Transverse colon (tissue), 4 donors: ENCODE measurements at regions of chr18 and their contacts with region 1.

Region 1: GRCh38 chr18:42114310-42114943 is 159.4 kb downstream of the PIK3C3 start:
- DNase-seq: peak; percentile 48
- H3K4me3 ChIP-seq: no peak overlapping the region
- H3K27ac ChIP-seq: peak overlapping the region in 1 of 4 donors; percentile 2
- H3K4me1 ChIP-seq: peaks cover 5 to 14% (median 10%) of the 10 kb centered on the region in 4 donors
- H3K27me3 ChIP-seq: no peaks in the 10 kb centered on the region
- CTCF ChIP-seq: peak; percentile 76 to 91 (median 85)
- EP300 ChIP-seq: no peak
- POLR2A ChIP-seq: no peak

Region 2: GRCh38 chr18:43271593-43272432 is 1157.4 kb after region 1 on chr18:
- in situ Hi-C with region 1: loop called in 3 of 4 experiments (anchors 10 to 25 kb)
- intact Hi-C with region 1: loop called (anchors 10 kb)
- DNase-seq: no peak
- H3K4me3 ChIP-seq: no peak overlapping the region
- H3K27ac ChIP-seq: no peak overlapping the region
- H3K4me1 ChIP-seq: no peaks in the 10 kb centered on the region
- H3K27me3 ChIP-seq: peaks cover 8% of the 10 kb centered on the region
- CTCF ChIP-seq: peak; percentile 66 to 79 (median 70)
- EP300 ChIP-seq: no peak
- POLR2A ChIP-seq: no peak

Region 3: GRCh38 chr18:43587538-43588153 is 1473.2 kb after region 1 on chr18:
- in situ Hi-C with region 1: loop called in 1 of 4 experiments (anchors 25 kb)
- intact Hi-C with region 1: no loop called
- DNase-seq: no peak
- H3K4me3 ChIP-seq: no peak overlapping the region
- H3K27ac ChIP-seq: no peak overlapping the region
- H3K4me1 ChIP-seq: no peaks in the 10 kb centered on the region
- H3K27me3 ChIP-seq: no peaks in the 10 kb centered on the region
- CTCF ChIP-seq: peak; percentile 59 to 72 (median 66)
- EP300 ChIP-seq: no peak
- POLR2A ChIP-seq: no peak